ENCODE measurements at regions of chr14 and their contacts with region 1.

Region 1: GRCh38 chr14:24108336-24108874 is 6.2 kb upstream of the DCAF11 start:
- DNase-seq: no peak
- ATAC-seq: peak; percentile 29 to 41 (median 36)
- H3K4me3 ChIP-seq: no peak overlapping the region
- H3K4me3 Mint-ChIP-seq: peak overlapping the region in 1 of 3 donors; percentile 5
- H3K27ac ChIP-seq: peak overlapping the region; percentile 79
- H3K27ac Mint-ChIP-seq: peak overlapping the region; percentile 94 to 98
- H3K4me1 ChIP-seq: peaks cover 3 to 14% of the 10 kb centered on the region in 2 experiments
- H3K4me1 Mint-ChIP-seq: peaks cover 11 to 20% (median 13%) of the 10 kb centered on the region in 3 donors
- H3K27me3 ChIP-seq: no peaks in the 10 kb centered on the region
- H3K27me3 Mint-ChIP-seq: no peaks in the 10 kb centered on the region

Region 2: GRCh38 chr14:23751616-23752015 is 356.8 kb before region 1 on chr14:
- CTCF ChIA-PET with region 1: interaction called in 1 of 2 experiments, 10 read pairs
- POLR2A ChIA-PET with region 1: no interaction called
- DNase-seq: no peak
- ATAC-seq: no peak
- H3K4me3 ChIP-seq: no peak overlapping the region
- H3K4me3 Mint-ChIP-seq: no peak overlapping the region
- H3K27ac ChIP-seq: no peak overlapping the region
- H3K27ac Mint-ChIP-seq: no peak overlapping the region
- H3K4me1 ChIP-seq: no peaks in the 10 kb centered on the region
- H3K4me1 Mint-ChIP-seq: no peaks in the 10 kb centered on the region
- H3K27me3 ChIP-seq: peaks cover 0 to 4% of the 10 kb centered on the region in 2 experiments
- H3K27me3 Mint-ChIP-seq: peaks cover 29% of the 10 kb centered on the region in 2 donors

Region 3: GRCh38 chr14:24093901-24094761 is 14.3 kb before region 1 on chr14 and contains the start of gene PCK2:
- CTCF ChIA-PET with region 1: interaction called, 23 to 96 read pairs
- POLR2A ChIA-PET with region 1: interaction called, 3 read pairs
- DNase-seq: peak; percentile 29 to 76 (median 60)
- ATAC-seq: peak; percentile 80 to 82 (median 80)
- H3K4me3 ChIP-seq: peak within 1 kb of the TSS; percentile 79 to 92
- H3K4me3 Mint-ChIP-seq: peak within 1 kb of the TSS; percentile 93 to 97 (median 96)
- H3K27ac ChIP-seq: peak within 1 kb of the TSS; percentile 83
- H3K27ac Mint-ChIP-seq: peak within 1 kb of the TSS; percentile 98
- H3K4me1 ChIP-seq: peaks cover 5 to 26% of the 10 kb centered on the region in 2 experiments
- H3K4me1 Mint-ChIP-seq: peaks cover 28 to 46% (median 39%) of the 10 kb centered on the region in 3 donors
- H3K27me3 ChIP-seq: no peaks in the 10 kb centered on the region
- H3K27me3 Mint-ChIP-seq: no peaks in the 10 kb centered on the region
- total RNA-seq, gene PCK2: 11.8 to 35.5 (median 29.4) TPM

Region 4: GRCh38 chr14:24146978-24147760 is 38.8 kb after region 1 on chr14 and contains the start of gene RNF31:
- CTCF ChIA-PET with region 1: interaction called, 3 to 24 read pairs
- POLR2A ChIA-PET with region 1: interaction called in 1 of 2 experiments, 23 read pairs
- DNase-seq: peak; percentile 90 to 99 (median 97)
- ATAC-seq: peak; percentile 89 to 93 (median 90)
- H3K4me3 ChIP-seq: peak within 1 kb of the TSS; percentile 69 to 91
- H3K4me3 Mint-ChIP-seq: peak within 1 kb of the TSS; percentile 96 to 99 (median 97)
- H3K27ac ChIP-seq: peak within 1 kb of the TSS; percentile 82
- H3K27ac Mint-ChIP-seq: peak within 1 kb of the TSS; percentile 95 to 99
- H3K4me1 ChIP-seq: peaks cover 17 to 58% of the 10 kb centered on the region in 2 experiments
- H3K4me1 Mint-ChIP-seq: peaks cover 64 to 69% (median 66%) of the 10 kb centered on the region in 3 donors
- H3K27me3 ChIP-seq: no peaks in the 10 kb centered on the region
- H3K27me3 Mint-ChIP-seq: no peaks in the 10 kb centered on the region
- total RNA-seq, gene RNF31: 67.7 to 131 (median 100) TPM

Region 5: GRCh38 chr14:24817212-24818057 is 709.0 kb after region 1 on chr14:
- CTCF ChIA-PET with region 1: no interaction called
- POLR2A ChIA-PET with region 1: no interaction called
- DNase-seq: no peak
- ATAC-seq: no peak
- H3K4me3 ChIP-seq: no peak overlapping the region
- H3K4me3 Mint-ChIP-seq: no peak overlapping the region
- H3K27ac ChIP-seq: no peak overlapping the region
- H3K27ac Mint-ChIP-seq: no peak overlapping the region
- H3K4me1 ChIP-seq: no peaks in the 10 kb centered on the region
- H3K4me1 Mint-ChIP-seq: no peaks in the 10 kb centered on the region
- H3K27me3 ChIP-seq: peaks cover 0 to 15% of the 10 kb centered on the region in 2 experiments
- H3K27me3 Mint-ChIP-seq: peaks cover 21 to 51% of the 10 kb centered on the region in 2 donors

Measured in T-cell (primary cell).